PC-3 (cell line): ENCODE measurements at regions of chr1 and their contacts with region 1.

Region 1: DNA sequence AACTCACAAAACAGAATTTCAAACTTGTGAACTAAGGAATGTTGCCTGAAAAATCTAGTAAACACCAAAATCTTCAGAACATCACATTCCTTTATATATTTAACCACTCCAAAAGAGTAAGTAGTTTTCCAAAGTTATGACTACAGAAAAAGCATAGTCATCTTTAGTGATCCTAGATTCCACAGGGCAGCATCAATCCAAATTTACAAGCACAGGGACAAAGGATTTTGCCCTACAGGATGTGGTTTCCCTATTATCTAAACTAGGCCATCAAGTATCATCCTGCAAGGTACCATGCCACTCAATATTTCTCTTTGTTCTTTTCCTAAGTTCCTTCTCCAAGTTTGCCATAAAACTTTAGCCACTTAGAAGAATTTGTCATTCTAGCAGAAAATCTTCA is 33.0 kb downstream of the COP1 start:
- DNase-seq: no peak
- ATAC-seq: no peak; the same call in 1 of the 2 replicates
- H3K4me3 ChIP-seq: no peak overlapping the region
- H3K27ac ChIP-seq: no peak overlapping the region
- H3K4me1 ChIP-seq: no peaks in the 10 kb centered on the region
- H3K27me3 ChIP-seq: no peaks in the 10 kb centered on the region
- CTCF ChIP-seq: no peak

Region 2: DNA sequence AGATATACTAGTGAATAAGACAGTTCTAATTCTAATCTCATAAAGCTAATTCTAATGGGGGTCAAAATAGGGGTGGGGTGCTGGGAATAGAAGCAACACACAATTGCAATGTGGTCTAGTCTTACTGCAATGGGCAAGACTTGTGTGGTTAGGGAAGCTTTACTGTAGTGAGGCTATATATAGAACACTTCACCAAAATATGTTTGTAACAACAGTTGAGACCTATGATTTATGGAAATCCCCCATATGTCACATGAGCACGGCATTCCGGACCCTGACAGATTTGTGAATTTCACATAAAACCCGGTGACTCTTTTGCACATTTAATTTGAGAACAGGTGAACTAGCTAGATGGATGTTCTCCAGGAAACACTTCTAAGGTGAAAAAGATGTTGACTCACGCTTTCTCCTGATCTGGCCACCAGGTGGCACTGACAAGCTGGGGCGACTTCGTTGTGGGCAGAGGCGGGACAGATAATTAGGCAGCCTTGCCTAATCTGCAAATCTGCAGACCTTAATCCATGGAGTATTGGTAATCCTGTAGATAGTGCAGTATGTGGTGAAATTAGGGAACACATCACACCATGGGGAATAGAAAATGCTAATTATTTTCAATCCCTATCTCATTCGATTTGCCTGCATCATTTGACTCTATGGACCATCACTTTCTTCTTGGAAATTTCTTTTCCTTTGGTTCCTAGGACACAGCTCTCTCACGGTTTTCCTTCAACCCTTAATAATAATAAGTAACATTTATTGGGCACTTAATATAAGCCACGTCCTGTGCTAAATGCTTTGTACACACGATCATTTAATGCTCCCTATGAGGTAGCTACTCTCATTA is 1019.3 kb before region 1 on chr1:
- CTCF ChIA-PET with region 1: no interaction called
- POLR2A ChIA-PET with region 1: no interaction called
- intact Hi-C with region 1: no loop called
- DNase-seq: peak; percentile 82
- ATAC-seq: peak; percentile 16; the same call in 1 of the 2 replicates
- H3K4me3 ChIP-seq: no peak overlapping the region
- H3K27ac ChIP-seq: no peak overlapping the region
- H3K4me1 ChIP-seq: peaks cover 29% of the 10 kb centered on the region
- H3K27me3 ChIP-seq: no peaks in the 10 kb centered on the region
- CTCF ChIP-seq: peak; percentile 78

Region 3: GRCh38 chr1:176149939-176150807 is 23.9 kb before region 1 on chr1:
- CTCF ChIA-PET with region 1: no interaction called
- POLR2A ChIA-PET with region 1: no interaction called
- intact Hi-C with region 1: loop called (anchors 1 kb)
- DNase-seq: no peak
- ATAC-seq: no peak
- H3K4me3 ChIP-seq: no peak overlapping the region
- H3K27ac ChIP-seq: no peak overlapping the region
- H3K4me1 ChIP-seq: no peaks in the 10 kb centered on the region
- H3K27me3 ChIP-seq: no peaks in the 10 kb centered on the region
- CTCF ChIP-seq: no peak

Region 4: DNA sequence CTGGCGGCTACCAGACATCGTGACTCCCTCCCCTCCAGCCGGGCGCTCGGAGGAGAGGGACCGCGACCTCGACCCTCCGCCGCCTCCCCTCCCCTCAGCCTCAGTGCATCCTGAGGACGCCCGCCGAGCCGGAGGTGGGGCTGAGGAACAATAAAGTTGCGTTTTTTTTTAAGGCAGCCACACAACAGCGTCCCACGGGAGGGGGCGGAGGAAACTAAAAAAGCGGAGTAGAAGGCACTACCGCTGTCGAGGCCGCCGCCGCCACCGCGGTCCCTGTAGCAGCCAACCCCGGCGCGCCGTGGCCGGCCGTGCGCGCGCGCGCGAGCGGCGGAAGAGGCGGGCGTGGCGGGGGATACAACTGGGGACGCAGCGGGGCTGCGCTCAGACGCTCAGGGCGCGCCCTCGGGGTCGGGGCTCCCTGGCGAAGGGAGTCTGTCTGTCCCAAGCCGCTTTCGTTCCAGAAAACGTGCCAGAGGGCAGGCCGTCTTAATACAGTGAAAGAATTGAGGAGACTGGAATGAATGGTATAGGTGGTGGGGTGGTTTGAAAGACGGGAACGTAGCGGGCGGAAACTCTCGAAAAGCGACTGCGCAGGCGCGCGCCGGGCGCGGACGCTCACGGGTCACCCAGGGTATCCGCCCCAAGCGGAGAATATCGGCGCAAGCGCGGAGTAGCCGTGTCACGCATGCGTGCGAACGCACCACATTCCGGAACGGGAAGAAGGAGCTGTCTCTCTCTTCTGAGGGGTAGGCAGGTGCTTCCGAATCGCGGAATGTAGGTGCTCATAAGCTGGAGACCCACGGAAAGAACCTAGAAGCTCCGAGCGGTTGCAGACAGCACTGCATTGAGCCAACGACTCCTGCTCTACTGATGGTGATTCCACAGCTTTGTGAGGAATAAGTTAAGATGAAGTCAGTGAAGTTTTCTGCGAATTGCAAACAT is 33.1 kb after region 1 on chr1 and contains the start of gene COP1:
- CTCF ChIA-PET with region 1: no interaction called
- POLR2A ChIA-PET with region 1: no interaction called
- intact Hi-C with region 1: no loop called
- DNase-seq: peak; percentile 96
- ATAC-seq: peak; percentile 85
- H3K4me3 ChIP-seq: peak within 1 kb of the TSS; percentile 97
- H3K27ac ChIP-seq: peak within 1 kb of the TSS; percentile 79
- H3K4me1 ChIP-seq: peaks cover 22% of the 10 kb centered on the region
- H3K27me3 ChIP-seq: no peaks in the 10 kb centered on the region
- CTCF ChIP-seq: no peak
- total RNA-seq, gene COP1: 8.8 and 16.6 TPM in 2 replicates